Transverse colon (tissue), 4 donors: ENCODE measurements at regions of chr10 and their contacts with region 1.

Region 1: DNA sequence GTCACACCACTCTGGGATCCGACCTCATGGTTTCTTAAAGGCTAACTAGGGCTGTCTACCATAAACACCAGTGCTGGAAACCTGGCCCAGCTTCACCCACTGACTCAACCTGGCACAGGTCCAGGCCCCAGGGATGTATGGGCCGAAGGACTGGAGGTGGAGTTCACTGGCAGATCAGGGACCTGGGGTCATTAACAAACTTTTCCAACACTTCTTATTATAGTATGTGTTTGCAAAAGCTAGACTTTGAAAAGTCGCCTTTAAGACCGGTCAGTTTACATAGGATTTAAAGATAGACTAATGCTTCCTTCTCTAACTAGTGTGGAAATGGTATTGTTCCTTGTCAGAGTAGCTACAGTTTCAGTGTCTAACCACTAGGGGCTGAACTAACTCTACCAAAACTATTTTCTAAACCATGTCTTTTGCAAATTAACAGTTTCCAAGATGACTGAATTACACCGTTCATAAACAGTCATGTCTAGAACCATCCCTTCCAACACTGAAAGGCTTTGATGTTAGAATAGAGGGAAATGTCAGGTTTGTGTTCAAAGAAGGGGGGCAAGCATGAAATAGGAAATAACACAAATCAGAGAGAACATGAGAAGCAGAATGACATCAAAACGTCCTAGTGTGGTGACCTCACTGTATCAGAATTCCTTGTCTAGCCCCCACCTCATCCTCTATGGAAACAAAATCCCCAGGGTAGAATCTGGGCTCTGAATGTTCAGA is 29.7 kb downstream of the STN1 start:
- DNase-seq: peak; percentile 91
- H3K4me3 ChIP-seq: no peak overlapping the region
- H3K27ac ChIP-seq: peak overlapping the region; percentile 78 to 92 (median 82)
- H3K4me1 ChIP-seq: peaks cover 6 to 48% (median 28%) of the 10 kb centered on the region in 4 donors
- H3K27me3 ChIP-seq: no peaks in the 10 kb centered on the region
- CTCF ChIP-seq: peak; percentile 80 to 97 (median 85)
- EP300 ChIP-seq: no peak
- POLR2A ChIP-seq: no peak

Region 2: GRCh38 chr10:103966671-103967447 is 78.6 kb after region 1 on chr10 and contains the start of gene SLK:
- in situ Hi-C with region 1: no loop called
- intact Hi-C with region 1: loop called (anchors 2 kb)
- DNase-seq: peak; percentile 85
- H3K4me3 ChIP-seq: peak within 1 kb of the TSS; percentile 83 to 96 (median 94)
- H3K27ac ChIP-seq: peak within 1 kb of the TSS; percentile 98 to 99 (median 98)
- H3K4me1 ChIP-seq: peaks cover 0 to 37% (median 29%) of the 10 kb centered on the region in 4 donors
- H3K27me3 ChIP-seq: no peaks in the 10 kb centered on the region
- CTCF ChIP-seq: no peak
- EP300 ChIP-seq: no peak
- POLR2A ChIP-seq: peak; percentile 72
- total RNA-seq, gene SLK: 33.2 to 76.4 (median 55.7) TPM

Region 3: GRCh38 chr10:104080762-104081161 is 192.5 kb after region 1 on chr10:
- in situ Hi-C with region 1: loop called in 1 of 4 experiments (anchors 25 kb)
- intact Hi-C with region 1: no loop called
- DNase-seq: peak; percentile 28
- H3K4me3 ChIP-seq: no peak overlapping the region
- H3K27ac ChIP-seq: no peak overlapping the region
- H3K4me1 ChIP-seq: peaks cover 0 to 4% (median 0%) of the 10 kb centered on the region in 4 donors
- H3K27me3 ChIP-seq: no peaks in the 10 kb centered on the region
- CTCF ChIP-seq: peak; percentile 33 to 58 (median 49)
- EP300 ChIP-seq: no peak
- POLR2A ChIP-seq: no peak

Region 4: GRCh38 chr10:104109908-104110662 is 221.8 kb after region 1 on chr10:
- in situ Hi-C with region 1: no loop called
- intact Hi-C with region 1: loop called (anchors 10 kb)
- DNase-seq: no peak
- H3K4me3 ChIP-seq: no peak overlapping the region
- H3K27ac ChIP-seq: no peak overlapping the region
- H3K4me1 ChIP-seq: peaks cover 0 to 5% (median 0%) of the 10 kb centered on the region in 4 donors
- H3K27me3 ChIP-seq: no peaks in the 10 kb centered on the region
- CTCF ChIP-seq: no peak
- EP300 ChIP-seq: no peak
- POLR2A ChIP-seq: no peak

Region 5: GRCh38 chr10:104209575-104210198 is 321.4 kb after region 1 on chr10:
- in situ Hi-C with region 1: loop called in 2 of 4 experiments (anchors 25 kb)
- intact Hi-C with region 1: no loop called
- DNase-seq: no peak
- H3K4me3 ChIP-seq: no peak overlapping the region
- H3K27ac ChIP-seq: no peak overlapping the region
- H3K4me1 ChIP-seq: no peaks in the 10 kb centered on the region
- H3K27me3 ChIP-seq: no peaks in the 10 kb centered on the region
- CTCF ChIP-seq: peak; percentile 38 to 53 (median 41)
- EP300 ChIP-seq: no peak
- POLR2A ChIP-seq: no peak